Activated naive CD4-positive, alpha-beta T cell treated with anti-CD3 and anti-CD28 coated beads for 36 hours (primary cell): ENCODE measurements at regions of chr6 and their contacts with region 1.

Region 1: DNA sequence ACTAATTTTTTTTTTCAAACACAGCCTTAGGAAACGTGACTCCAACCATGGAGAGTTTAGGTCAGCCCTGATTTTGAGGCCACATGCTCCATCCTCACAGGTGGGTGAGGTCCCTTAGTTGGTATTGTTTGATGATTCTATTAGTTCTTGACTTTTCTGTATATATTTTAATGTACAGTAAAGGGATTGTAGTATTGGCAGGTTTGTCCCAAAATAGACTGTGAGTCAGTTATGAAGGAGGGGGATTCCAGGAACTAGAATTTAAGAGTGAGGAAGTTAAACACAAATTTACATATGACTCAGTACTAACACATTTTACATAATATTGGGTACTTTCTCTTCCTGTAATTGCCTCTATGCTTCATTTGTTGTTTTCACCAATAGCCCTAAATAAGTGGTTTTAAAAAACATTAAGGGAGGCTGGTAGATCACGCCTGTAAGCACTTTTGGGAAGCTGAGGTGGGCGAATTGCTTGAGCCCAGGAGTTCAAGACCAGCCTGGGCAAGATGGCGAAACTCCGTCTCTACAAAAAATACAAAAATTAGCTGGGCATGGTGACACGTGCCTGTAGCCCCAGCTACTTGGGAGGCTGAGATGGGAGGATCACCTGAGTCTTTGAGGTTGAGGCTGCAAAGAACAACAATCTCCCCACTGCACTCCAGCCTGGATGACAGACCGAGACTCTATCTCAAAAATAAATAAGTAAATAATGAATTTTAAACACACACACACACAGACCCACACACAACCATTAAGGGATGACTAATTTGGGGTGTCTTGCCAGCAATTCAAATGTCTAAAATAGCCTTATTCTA is 81.8 kb downstream of the SGK1 start:
- DNase-seq: peak; percentile 41
- H3K4me3 Mint-ChIP-seq: peak overlapping the region; percentile 15
- H3K27ac Mint-ChIP-seq: peak overlapping the region; percentile 95
- H3K4me1 Mint-ChIP-seq: peaks cover 57% of the 10 kb centered on the region
- H3K27me3 Mint-ChIP-seq: no peaks in the 10 kb centered on the region

Region 2: GRCh38 chr6:134201711-134202110 is 34.4 kb before region 1 on chr6:
- CTCF ChIA-PET with region 1: no interaction called
- intact Hi-C with region 1: loop called (anchors 2 kb)
- DNase-seq: no peak
- H3K4me3 Mint-ChIP-seq: no peak overlapping the region
- H3K27ac Mint-ChIP-seq: no peak overlapping the region
- H3K4me1 Mint-ChIP-seq: peaks cover 15% of the 10 kb centered on the region
- H3K27me3 Mint-ChIP-seq: no peaks in the 10 kb centered on the region

Region 3: DNA sequence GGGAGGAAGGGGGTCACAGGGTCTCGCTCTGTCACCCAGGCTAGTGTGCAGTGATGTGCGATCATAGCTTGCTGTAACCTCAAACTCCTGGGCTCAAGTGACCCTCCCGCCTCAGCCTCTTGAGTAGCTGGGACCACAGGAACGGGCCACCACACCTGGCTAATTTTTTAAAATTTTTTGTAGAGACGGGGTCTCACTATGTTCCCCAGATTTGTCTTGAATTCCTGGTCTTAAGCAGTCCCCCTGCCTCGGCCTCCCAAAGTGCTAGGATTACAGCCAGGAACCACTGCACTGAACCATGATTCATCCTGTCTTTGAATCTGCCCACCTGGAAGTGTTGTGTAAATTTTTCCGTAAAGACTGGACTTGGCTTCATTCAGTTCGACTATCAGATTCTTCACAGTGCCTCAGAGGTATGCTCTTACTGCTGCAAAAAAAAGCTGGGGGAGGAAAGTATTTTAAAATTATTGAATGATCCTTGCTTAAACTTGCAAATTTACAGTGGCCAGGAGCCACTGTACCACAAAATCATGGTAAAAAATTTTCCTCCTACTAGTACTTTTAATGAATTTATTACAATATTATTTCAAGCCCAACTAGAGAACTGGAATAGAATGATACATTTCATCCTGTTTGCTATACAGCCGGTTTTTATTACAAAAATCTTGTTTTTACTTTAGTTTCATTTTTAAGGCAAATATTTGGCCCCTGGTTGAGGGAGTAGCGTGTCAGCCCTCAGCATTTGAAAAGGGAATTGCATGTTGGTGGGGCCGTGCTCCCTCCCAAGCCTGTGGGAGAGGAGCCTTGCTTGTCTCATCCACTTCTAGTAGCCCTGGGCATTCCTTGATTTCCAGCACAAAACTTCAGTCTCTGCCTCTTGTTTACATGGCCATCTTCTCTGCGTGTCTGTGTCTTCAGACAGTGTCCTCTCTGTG is 284.3 kb after region 1 on chr6:
- CTCF ChIA-PET with region 1: no interaction called
- intact Hi-C with region 1: loop called (anchors 2 kb)
- DNase-seq: no peak
- H3K4me3 Mint-ChIP-seq: no peak overlapping the region
- H3K27ac Mint-ChIP-seq: peak overlapping the region; percentile 56
- H3K4me1 Mint-ChIP-seq: peaks cover 57% of the 10 kb centered on the region
- H3K27me3 Mint-ChIP-seq: no peaks in the 10 kb centered on the region